HEK293T (cell line): ENCODE measurements at regions of chr16 and their contacts with region 1.

Region 1: DNA sequence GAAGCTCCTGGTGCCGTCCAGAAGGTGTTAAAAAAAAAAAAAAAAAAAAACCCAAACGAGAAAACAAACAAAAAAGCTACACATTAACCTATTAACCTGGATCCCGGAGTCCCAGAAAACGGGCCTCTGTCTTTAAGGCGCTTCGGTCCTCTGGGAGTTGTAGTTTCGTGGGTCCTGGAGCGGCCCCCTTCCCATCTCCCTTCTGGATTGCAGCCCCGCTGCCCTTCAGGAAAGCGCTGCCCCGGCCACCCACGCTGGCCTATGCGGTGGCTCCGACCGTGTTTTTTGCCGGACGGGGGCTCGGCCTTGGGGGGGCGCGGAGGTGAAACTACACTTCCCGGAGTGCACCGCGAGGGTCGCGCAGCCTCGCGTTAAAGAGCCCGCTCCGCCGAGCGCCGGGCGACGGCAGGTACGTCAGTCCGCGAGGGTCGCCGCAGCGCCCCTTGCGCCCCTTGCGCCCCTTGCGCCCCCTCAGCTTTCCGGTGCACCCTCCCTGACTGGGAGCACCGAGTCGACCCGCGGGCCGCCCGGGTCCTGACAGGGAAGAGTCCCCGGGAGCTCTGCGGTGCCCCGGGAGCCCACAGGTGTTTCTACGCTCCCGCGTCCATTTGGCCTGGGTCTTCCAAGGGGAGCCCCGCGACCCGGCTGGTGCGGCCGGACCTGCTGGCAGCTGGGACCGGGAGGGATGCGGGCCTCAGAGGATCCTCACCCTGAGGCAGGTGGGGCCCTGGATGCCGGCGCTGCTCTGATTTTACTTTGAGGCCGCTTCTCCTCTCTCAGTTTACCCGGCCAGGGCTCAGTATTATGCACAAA is at the start of gene FCSK:
- DNase-seq: peak; percentile 84

Region 2: DNA sequence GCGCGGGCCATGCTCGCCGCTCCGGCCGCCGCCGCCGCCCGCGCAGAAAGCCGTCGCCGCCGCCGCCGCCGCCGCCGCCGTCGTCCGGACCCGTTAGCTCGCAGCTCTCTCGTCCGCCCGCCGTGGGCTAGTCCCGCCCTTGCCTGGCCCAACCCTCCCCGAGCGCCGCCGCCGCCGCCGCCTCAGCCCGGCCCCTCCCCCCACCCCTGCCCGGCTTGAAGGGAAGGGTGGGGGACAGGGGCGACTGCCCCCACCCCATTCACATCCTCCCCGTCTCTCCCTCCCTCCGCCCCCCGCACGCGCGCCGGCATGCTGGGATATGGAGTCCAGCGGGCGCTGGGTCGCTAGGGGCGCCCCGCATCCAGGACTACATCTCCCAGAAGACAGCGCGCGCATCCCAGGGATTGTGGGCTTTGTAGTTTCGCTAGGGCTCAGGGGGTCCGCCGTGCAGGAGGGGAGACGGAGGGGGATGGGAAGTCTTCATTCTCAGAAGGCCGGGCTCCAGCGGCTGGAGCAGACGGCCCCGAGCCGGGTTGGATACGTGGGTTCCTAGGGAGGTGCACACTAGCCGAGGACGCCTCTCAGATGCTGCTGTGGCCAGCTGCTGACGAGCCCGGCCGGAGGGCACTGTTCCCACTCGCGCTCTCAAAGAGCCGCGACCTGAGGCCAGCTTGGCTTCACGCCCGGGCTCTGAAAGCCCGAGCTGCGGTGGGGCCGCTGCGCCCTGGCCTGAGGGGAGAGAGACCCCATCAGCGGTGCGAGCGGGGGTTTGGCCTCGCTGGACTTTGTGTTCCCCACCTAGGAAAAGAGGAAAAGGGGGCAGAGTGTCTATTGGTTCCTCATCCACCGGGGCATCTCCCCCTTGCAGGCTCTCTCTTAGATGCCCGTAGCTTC is 15.2 kb before region 1 on chr16 and contains the start of gene ST3GAL2:
- CTCF ChIA-PET with region 1: interaction called, 7 read pairs
- POLR2A ChIA-PET with region 1: interaction called, 27 read pairs
- DNase-seq: peak; percentile 93